ENCODE measurements at regions of chr11 and their contacts with region 1.

Region 1: DNA sequence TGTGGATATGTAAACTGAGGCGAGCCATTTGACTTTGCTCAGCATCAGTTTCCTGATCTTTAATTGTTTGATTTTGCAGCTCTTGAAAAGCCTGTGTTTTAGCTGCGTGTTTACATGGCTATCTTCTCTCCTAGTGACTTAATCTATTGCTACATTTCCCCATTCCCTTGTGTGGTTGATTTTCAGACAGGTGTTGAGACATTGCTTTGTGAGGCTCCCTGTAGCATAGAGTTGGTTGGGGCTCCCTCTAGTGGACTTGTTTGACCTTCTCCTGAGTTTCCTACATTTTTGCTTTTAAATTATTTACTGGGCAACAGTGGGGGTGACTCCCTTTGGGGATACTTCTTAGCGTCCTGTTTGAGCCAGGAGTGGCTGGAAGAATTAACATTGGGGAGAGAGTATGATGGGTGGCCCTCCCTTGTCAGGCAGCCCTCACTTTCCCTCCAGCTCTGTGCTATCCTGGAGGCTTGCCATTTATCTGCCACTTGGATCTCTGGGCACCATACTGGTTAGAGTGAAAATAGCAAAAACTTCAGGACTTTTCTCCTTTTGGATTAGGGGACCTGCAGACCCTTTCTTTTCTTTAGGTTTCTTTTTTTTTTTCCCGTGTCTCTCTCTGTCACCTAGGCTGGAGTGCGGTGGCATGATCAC is 9.2 kb upstream of the CBL start:
- DNase-seq: peak; percentile 73 to 79 (median 76)
- H3K4me3 ChIP-seq: no peak overlapping the region
- H3K4me3 Mint-ChIP-seq: peak overlapping the region in 1 of 8 donors; percentile 47
- H3K27ac ChIP-seq: no peak overlapping the region
- H3K27ac Mint-ChIP-seq: peak overlapping the region in 1 of 7 donors; percentile 43
- H3K4me1 ChIP-seq: no peaks in the 10 kb centered on the region
- H3K4me1 Mint-ChIP-seq: peaks cover 0 to 6% (median 3%) of the 10 kb centered on the region in 4 donors
- H3K27me3 ChIP-seq: no peaks in the 10 kb centered on the region
- H3K27me3 Mint-ChIP-seq: peaks cover 0 to 1% of the 10 kb centered on the region in 2 donors

Region 2: DNA sequence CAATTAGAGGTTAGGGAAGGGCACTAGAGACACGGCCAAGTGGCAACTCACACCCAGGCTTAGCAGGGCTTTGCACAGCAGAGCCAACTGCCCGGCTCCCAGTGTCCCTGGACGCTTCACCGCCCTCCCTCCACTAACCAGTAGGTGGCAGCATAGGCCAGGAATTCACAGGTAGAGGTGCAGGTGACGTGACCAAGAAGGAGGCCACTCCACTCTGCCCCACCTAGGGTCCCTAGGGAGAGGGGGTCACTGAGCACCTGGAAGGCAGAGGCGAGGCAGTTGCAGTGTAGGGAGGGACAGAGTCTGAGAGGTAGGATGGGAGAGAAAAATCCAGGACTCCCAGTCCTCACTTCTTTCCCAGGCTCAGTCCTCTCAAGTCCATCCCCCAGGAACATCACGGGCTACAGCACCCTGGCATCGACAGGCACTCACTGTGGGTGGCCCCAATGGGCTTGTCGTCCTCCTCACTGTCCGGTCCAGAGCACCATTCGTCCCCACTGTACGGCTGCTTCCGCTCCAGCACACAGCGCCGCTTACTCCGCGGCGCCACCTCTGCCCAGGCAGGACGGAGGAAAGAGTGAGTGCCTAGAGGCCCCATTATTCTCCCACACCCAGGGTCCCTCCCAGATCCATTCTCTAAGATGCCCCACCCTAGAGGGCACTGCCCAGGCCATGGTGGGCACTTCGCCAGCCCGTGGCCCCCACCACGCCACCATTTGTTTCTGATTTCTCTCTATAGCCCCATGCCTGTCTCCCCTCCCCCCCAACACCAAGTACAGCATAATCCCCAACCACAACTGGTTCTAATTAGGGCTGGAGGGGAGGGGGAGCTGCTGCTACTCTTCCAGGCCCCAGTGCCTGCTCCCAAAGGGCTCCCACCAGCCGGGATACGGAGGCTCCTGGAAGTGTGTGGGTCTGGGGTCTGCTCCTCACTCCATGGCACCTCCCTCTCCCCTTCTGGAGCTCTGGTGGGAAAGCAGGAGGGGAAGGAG is 289.6 kb before region 1 on chr11:
- CTCF ChIA-PET with region 1: no interaction called
- POLR2A ChIA-PET with region 1: no interaction called
- intact Hi-C with region 1: loop called (anchors 2 kb)
- DNase-seq: peak; percentile 80 to 86 (median 83)
- H3K4me3 ChIP-seq: no peak overlapping the region
- H3K4me3 Mint-ChIP-seq: peak overlapping the region in 6 of 8 donors; percentile 0 to 85 (median 54)
- H3K27ac ChIP-seq: peak overlapping the region; percentile 40
- H3K27ac Mint-ChIP-seq: peak overlapping the region; percentile 91 to 96 (median 95)
- H3K4me1 ChIP-seq: peaks cover 55% of the 10 kb centered on the region
- H3K4me1 Mint-ChIP-seq: peaks cover 32 to 51% (median 42%) of the 10 kb centered on the region in 4 donors
- H3K27me3 ChIP-seq: no peaks in the 10 kb centered on the region
- H3K27me3 Mint-ChIP-seq: no peaks in the 10 kb centered on the region

Region 3: DNA sequence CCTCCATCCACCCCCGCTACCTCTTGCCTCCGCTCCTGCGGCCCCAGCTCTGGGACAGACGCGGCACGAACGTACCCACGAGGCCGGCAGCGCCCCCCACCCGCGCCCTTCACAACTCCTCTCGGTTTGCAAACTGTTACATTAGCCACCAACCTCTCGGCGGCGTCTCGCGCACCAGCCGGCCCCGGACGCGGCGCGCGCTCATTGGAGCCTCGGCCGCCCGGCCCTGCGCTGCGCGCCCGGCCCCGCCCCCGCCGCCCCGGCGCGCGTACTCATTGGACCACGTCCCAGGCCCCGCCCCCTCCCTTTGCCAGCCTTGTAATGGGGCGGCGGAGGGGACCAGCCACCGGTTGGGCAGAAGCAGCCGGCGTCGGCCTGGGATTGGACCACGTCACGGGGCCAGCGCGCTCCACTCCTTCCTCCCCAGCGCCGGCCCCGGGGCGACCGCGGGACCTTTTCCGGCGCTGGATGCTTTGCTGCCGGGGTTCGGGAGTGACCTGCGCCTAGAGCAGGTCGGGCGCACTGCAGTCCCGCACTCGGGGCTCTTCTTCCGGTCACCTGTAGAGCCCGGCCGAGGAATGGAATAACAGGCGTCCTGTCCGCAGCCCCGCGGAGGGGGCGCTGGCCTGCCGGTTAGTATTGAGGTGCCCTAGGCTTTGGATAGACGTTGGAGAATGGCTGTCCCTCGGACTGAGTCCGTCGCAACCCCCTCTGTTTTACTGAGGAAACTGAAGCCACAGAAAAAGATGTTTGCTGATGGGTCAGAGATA is 139.8 kb before region 1 on chr11 and contains the start of gene HYOU1:
- CTCF ChIA-PET with region 1: interaction called, 11 read pairs
- POLR2A ChIA-PET with region 1: no interaction called
- intact Hi-C with region 1: loop called (anchors 2 kb)
- DNase-seq: peak; percentile 98
- H3K4me3 ChIP-seq: peak within 1 kb of the TSS; percentile 82 to 87
- H3K4me3 Mint-ChIP-seq: peak within 1 kb of the TSS; percentile 92 to 98 (median 97)
- H3K27ac ChIP-seq: peak within 1 kb of the TSS; percentile 91
- H3K27ac Mint-ChIP-seq: peak within 1 kb of the TSS; percentile 91 to 98 (median 97)
- H3K4me1 ChIP-seq: peaks cover 25% of the 10 kb centered on the region
- H3K4me1 Mint-ChIP-seq: peaks cover 20 to 52% (median 39%) of the 10 kb centered on the region in 4 donors
- H3K27me3 ChIP-seq: no peaks in the 10 kb centered on the region
- H3K27me3 Mint-ChIP-seq: no peaks in the 10 kb centered on the region
- total RNA-seq, gene HYOU1: 136 to 146 TPM

Region 4: DNA sequence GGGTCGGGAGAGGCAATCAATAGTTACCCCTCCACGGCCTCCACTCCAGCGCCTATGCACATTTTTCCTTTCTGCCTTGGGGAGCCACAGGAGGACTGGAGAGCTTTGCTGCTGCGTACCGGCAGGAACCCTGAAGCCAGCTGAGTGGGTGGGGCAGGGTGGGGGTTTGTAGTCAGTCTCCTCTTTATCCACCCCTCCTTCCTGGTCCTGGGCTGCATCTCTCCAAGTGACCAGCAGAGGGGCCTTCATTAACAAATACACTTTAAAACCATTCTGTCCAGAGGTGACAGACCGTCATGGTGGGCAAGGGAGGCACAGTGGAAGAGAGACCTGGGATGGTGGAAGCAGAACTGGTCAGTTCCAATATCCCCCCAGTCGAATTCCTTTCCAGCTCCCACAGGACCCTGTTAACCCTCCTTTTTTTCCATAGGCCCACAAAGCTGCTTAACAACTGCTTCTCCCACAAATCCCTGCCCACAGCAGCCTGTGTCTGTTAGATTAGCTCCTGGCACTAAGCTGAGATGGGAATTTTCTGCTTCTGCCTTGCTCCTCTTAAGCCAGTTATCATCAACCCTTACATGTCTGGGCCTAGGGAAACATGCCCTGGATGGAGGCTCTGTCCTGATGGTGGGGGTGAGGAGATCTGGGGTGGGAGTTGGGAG is 52.0 kb before region 1 on chr11:
- CTCF ChIA-PET with region 1: no interaction called
- POLR2A ChIA-PET with region 1: no interaction called
- intact Hi-C with region 1: loop called (anchors 10 kb)
- DNase-seq: peak in 3 of 5 donors; percentile 12 to 48 (median 16)
- H3K4me3 ChIP-seq: no peak overlapping the region
- H3K4me3 Mint-ChIP-seq: no peak overlapping the region
- H3K27ac ChIP-seq: no peak overlapping the region
- H3K27ac Mint-ChIP-seq: no peak overlapping the region
- H3K4me1 ChIP-seq: peaks cover 14% of the 10 kb centered on the region
- H3K4me1 Mint-ChIP-seq: peaks cover 2 to 15% (median 9%) of the 10 kb centered on the region in 4 donors
- H3K27me3 ChIP-seq: peaks cover 13% of the 10 kb centered on the region
- H3K27me3 Mint-ChIP-seq: peaks cover 16 to 32% of the 10 kb centered on the region in 2 donors

Region 5: DNA sequence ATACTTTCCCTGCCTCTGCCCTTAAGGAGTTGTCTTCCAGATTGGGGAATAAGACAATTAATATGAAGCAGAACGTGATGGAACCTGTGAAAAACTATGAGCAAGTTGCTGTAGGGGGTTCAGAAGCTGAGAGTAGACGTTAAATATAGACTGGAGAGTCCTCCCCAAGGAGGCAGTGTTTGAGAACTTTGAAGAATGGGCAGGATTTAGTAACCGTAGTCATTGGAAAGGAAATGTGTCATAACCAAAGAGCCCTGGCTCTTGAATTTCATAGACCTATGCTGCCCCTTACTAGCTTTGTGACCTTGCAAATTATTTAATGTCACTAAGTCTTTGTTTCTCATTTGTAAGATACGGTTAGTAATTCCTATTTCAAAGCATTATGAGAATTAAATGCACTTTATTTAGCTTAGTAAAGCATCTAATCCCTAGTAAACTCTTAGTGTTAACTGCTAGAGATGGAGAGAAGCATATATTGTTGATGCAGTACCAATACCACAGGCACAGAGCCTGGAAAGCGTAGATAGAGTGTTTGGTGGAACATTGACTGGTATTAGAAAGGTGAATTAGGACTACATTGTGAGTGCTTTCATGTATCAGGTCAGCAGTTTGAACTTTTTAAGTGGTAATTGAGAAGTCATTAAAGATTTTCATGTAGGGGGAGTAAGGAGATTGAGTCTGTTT is 65.9 kb after region 1 on chr11:
- CTCF ChIA-PET with region 1: interaction called, 18 read pairs
- POLR2A ChIA-PET with region 1: no interaction called
- intact Hi-C with region 1: no loop called
- DNase-seq: peak in 2 of 5 donors; percentile 9 to 21
- H3K4me3 ChIP-seq: peak overlapping the region in 1 of 2 donors; percentile 5
- H3K4me3 Mint-ChIP-seq: no peak overlapping the region
- H3K27ac ChIP-seq: peak overlapping the region; percentile 39
- H3K27ac Mint-ChIP-seq: no peak overlapping the region
- H3K4me1 ChIP-seq: peaks cover 94% of the 10 kb centered on the region
- H3K4me1 Mint-ChIP-seq: peaks cover 44 to 60% (median 49%) of the 10 kb centered on the region in 4 donors
- H3K27me3 ChIP-seq: no peaks in the 10 kb centered on the region
- H3K27me3 Mint-ChIP-seq: no peaks in the 10 kb centered on the region

Region 6: DNA sequence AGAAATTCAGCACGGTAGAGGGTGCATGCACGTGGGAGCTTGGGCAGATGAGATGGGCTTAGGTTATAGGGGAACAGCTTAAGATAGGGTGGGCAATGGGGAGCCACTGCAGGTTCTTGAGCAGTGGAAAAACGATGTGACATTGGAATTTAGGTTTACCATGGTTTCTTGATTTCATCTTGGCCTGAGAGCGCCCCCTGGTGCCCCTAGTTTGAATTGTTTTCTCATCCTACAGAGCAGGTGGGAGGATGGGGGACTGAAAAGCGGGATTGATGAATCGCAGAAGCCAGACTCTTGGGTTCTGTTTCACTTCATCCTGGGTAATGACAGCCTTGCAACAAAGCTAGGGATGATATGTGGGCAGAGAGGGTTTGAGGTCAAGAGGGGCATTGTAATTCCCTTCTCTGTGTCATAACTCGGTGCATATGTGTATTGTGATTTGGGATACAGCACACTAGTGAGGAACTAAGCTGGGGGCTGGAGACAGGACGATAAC is 126.6 kb after region 1 on chr11:
- CTCF ChIA-PET with region 1: interaction called, 7 read pairs
- POLR2A ChIA-PET with region 1: no interaction called
- intact Hi-C with region 1: loop called (anchors 2 kb)
- DNase-seq: peak; percentile 69 to 80 (median 74)
- H3K4me3 ChIP-seq: no peak overlapping the region
- H3K4me3 Mint-ChIP-seq: peak overlapping the region in 4 of 8 donors; percentile 15 to 68 (median 40)
- H3K27ac ChIP-seq: no peak overlapping the region
- H3K27ac Mint-ChIP-seq: peak overlapping the region in 3 of 7 donors; percentile 38 to 82 (median 47)
- H3K4me1 ChIP-seq: peaks cover 40% of the 10 kb centered on the region
- H3K4me1 Mint-ChIP-seq: peaks cover 15 to 34% (median 24%) of the 10 kb centered on the region in 4 donors
- H3K27me3 ChIP-seq: no peaks in the 10 kb centered on the region
- H3K27me3 Mint-ChIP-seq: peaks cover 0 to 5% of the 10 kb centered on the region in 2 donors

Measured in CD4-positive, alpha-beta memory T cell (primary cell).